ENCODE measurements at regions of chr3 and their contacts with region 1.

Region 1: DNA sequence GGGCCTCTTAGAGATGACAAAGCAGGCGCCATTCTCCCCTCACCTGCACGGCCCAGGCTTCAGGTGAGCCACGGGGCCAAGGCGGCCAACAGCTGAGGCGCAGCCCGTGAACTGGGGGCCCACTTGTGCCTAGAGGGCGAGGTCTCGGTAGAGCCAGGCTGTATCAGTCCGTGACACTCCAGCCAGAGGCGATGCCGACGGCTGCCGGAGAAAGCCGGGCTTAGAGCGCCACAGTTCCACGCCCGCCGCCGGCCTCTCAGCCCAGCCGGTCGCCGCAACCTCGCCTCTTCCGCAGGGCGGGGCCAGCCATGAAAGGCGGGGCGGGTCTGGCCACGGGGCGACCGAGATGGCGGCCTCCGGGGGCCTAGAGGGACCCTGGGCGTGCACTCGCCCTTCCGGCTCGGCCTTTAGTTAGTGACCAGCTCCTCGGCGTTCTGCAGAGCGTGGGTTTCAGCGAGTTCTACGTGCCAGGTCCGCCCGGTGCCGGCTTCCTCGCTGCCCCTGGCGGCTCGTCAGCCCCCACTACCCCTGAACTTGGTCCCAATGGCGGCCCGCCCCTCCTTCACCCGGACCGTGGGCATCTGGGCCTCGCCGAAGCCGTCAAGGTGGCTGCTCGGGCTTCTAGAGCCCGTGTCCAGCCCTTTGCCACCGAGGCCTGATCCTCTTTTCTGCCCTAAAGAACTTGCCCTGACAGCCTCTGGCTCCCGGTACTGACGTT is at the start of gene ZNF621:
- DNase-seq: peak; percentile 43 to 90 (median 73)
- ATAC-seq: peak; percentile 99
- H3K4me3 ChIP-seq: peak within 1 kb of the TSS; percentile 69
- H3K4me3 Mint-ChIP-seq: peak within 1 kb of the TSS; percentile 85 to 97 (median 96)
- H3K27ac ChIP-seq: peak within 1 kb of the TSS; percentile 81
- H3K27ac Mint-ChIP-seq: peak within 1 kb of the TSS; percentile 91 to 98 (median 97)
- H3K4me1 ChIP-seq: peaks cover 0 to 15% of the 10 kb centered on the region in 2 donors
- H3K4me1 Mint-ChIP-seq: peaks cover 17 to 39% (median 27%) of the 10 kb centered on the region in 7 donors
- H3K27me3 ChIP-seq: no peaks in the 10 kb centered on the region
- H3K27me3 Mint-ChIP-seq: no peaks in the 10 kb centered on the region
- total RNA-seq, gene ZNF621: 14.6 to 26.9 (median 21.9) TPM

Region 2: DNA sequence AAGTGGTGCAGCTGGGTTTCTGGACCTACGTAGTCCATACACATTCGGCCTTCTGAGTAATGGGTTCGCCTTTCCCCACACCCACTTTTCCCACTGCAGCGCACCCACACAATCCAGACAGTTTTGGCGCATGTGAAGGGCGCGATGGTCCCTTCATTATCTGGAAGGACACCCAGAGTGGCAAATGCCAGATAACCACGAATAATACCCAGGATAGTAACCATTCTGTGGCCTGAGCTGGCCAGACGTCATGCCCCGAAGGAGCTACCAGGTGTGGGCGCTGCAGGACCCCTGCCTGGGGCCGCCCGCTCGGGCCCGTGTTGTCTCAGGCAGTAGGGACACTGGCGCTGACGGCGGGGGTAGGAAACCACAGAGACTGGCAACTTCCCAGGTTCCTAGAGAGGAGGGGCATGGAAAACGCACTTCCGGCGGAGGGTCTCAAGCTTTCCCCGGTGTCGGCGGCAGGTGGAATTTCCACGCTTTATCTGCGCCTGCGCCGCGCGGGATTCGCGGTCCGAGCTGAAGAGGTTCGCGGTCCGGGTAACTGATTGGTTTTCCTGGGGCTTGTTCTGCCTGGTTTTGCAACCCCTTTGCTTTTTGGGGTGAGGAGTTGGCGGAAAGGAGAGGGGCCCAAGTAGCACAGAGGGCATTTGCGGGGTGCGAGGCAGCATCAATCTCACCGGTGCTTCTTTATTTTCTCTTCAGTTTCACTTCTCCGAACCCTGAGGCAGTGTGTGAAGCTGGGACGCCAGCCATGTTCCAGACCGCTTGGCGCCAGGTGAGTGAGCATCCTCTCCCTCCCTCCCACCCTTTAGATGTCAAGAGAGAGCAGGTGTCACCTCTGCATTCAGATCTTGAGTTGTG is 18.9 kb before region 1 on chr3 and contains the start of gene ZNF620:
- CTCF ChIA-PET with region 1: no interaction called
- POLR2A ChIA-PET with region 1: interaction called, 14 read pairs
- intact Hi-C with region 1: loop called (anchors 1 kb)
- DNase-seq: peak; percentile 11 to 57 (median 29)
- ATAC-seq: peak; percentile 82
- H3K4me3 ChIP-seq: peak within 1 kb of the TSS; percentile 88
- H3K4me3 Mint-ChIP-seq: peak within 1 kb of the TSS; percentile 86 to 98 (median 97)
- H3K27ac ChIP-seq: peak within 1 kb of the TSS; percentile 61
- H3K27ac Mint-ChIP-seq: peak within 1 kb of the TSS; percentile 67 to 94 (median 86)
- H3K4me1 ChIP-seq: peaks cover 5% of the 10 kb centered on the region in 2 donors
- H3K4me1 Mint-ChIP-seq: peaks cover 6 to 27% (median 9%) of the 10 kb centered on the region in 7 donors
- H3K27me3 ChIP-seq: no peaks in the 10 kb centered on the region
- H3K27me3 Mint-ChIP-seq: peaks cover 0 to 12% (median 0%) of the 10 kb centered on the region in 5 donors
- total RNA-seq, gene ZNF620: 1.3 to 6.4 (median 3.3) TPM

Measured in naive thymus-derived CD4-positive, alpha-beta T cell (primary cell).